ENCODE measurements at regions of chr12 and their contacts with region 1.

Region 1: DNA sequence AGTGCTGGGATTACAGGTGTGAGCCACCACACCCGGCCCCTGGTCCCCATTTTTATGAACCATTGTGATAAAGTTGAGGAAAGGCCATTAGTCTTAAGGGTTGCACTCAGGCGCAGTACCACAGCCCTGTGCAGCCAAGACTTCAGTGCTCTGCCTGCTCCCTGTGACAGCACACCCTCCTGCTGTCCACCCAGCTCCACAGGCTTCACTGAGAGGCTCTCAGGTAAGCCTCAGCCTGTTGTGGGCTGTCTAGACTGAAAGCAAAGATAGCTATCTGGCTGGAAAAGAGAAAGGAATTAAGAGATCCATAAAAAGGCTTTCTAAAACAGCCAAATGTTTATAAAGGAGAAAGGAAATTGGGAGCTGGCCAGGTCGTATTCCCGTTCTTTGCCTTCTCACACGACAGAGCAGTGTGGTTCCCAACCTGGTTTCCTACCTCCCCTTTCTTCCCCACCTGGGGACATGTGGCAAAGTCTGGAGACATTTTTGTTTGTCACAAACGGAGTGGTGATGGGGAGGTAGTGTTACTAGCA is 19.1 kb upstream of the DNM1L start:
- DNase-seq: no peak
- ATAC-seq: no peak
- H3K4me3 ChIP-seq: no peak overlapping the region
- H3K27ac ChIP-seq: peak overlapping the region; percentile 11
- H3K4me1 ChIP-seq: peaks cover 6% of the 10 kb centered on the region
- H3K27me3 ChIP-seq: no peaks in the 10 kb centered on the region
- CTCF ChIP-seq: no peak

Region 2: DNA sequence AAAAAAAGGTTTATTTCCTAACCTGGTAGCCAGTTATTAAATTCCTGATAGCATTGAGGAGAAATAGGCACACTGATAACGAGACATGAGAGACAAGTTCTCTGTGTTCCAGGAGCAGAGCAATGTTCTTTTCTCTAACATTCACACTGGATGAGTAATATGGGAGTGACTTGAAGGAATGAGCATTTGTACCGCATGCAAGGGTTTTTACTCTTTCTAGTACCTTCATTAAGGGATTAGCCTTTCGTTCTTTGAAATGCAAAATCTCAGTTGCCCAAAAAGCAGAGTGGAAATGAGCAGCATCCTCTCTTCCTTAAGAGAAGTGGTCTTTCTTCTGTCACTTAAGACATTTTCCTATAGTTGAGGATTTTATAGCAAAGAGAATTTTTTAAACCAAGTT is 205.9 kb before region 1 on chr12:
- intact Hi-C with region 1: loop called (anchors 5 kb)
- DNase-seq: no peak
- ATAC-seq: peak; percentile 82
- H3K4me3 ChIP-seq: no peak overlapping the region
- H3K27ac ChIP-seq: peak overlapping the region; percentile 43
- H3K4me1 ChIP-seq: peaks cover 34% of the 10 kb centered on the region
- H3K27me3 ChIP-seq: no peaks in the 10 kb centered on the region
- CTCF ChIP-seq: no peak

Measured in upper lobe of right lung (tissue), 1 donor.